HepG2 (cell line): ENCODE measurements at regions of chr16 and their contacts with region 1.

Region 1: DNA sequence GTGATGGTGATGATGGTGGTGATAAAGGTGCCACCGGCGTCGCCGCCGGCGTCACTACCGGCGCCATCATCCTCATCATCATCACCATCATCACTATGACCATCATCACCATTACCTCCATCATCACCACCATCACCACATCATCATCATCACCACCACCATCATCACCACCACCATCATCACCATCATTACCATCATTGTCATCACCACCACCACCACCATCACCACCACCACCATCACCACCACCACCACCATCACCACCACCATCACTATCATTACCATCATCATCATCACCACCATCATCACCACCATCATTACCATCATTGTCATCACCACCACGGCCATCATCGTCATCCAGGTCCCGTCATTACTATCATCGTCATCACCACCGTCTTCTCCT is 179.7 kb downstream of the NPIPB11 start:
- DNase-seq: no peak
- ATAC-seq: no peak
- H3K4me3 ChIP-seq: no peak overlapping the region
- H3K27ac ChIP-seq: no peak overlapping the region
- H3K4me1 ChIP-seq: peaks cover 33% of the 10 kb centered on the region
- H3K27me3 ChIP-seq: no peaks in the 10 kb centered on the region
- CTCF ChIP-seq: no peak
- EP300 ChIP-seq: no peak
- POLR2A ChIP-seq: no peak
- RAD21 ChIP-seq: no peak

Region 2: GRCh38 chr16:29192325-29193247 is 34.2 kb before region 1 on chr16:
- CTCF ChIA-PET with region 1: no interaction called
- POLR2A ChIA-PET with region 1: no interaction called
- in situ Hi-C with region 1: no loop called
- intact Hi-C with region 1: no loop called
- DNase-seq: no peak
- ATAC-seq: peak; percentile 58
- H3K4me3 ChIP-seq: no peak overlapping the region
- H3K27ac ChIP-seq: no peak overlapping the region
- H3K4me1 ChIP-seq: peaks cover 14% of the 10 kb centered on the region
- H3K27me3 ChIP-seq: peaks cover 4 to 9% of the 10 kb centered on the region in 2 experiments; a peak in 3 of 5 replicates
- CTCF ChIP-seq: peak; percentile 46
- EP300 ChIP-seq: no peak
- POLR2A ChIP-seq: no peak
- RAD21 ChIP-seq: no peak

Region 3: DNA sequence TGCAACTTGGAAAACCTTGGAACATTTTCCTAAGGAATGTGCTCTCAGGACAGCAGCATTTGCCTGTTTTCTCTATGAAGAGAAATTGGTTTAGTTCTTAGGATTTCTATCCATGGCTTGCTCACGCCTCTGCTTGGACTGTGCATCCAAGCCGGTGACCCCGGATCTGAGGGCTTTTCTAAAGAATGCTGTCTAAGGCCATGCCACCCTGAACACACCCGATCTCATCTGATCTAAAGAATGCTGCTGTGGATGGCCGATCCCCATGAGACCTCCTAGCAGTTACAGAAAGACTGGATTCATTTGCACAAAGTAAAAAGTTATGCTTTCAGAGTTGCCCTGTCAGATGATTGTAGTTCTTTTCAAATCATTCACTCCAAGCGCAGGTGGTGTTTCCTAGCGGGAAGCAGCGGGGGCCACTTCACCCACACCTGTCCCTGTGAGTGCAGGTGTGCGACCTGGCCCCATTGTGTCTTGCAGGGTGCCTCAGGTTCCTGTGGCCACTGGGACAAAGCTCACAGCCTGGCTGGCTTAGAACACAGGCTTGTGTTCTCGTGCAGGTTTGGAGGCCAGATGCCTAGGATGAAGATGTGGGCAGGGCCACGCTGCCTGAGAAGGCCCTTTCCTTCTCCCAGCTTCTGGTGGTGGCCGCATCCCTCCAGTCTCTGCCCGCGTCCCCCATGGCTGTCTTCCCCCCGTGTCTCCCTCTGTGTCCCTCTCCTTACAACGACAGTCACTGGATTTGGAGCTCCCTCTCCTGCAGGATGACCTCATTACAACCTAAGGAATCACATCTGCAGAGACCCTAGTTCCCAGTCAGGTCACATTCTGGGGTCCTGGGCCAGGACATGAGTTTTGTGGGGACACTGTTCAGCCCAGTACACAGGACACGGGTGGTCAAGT is 89.1 kb after region 1 on chr16:
- CTCF ChIA-PET with region 1: no interaction called
- POLR2A ChIA-PET with region 1: no interaction called
- in situ Hi-C with region 1: no loop called
- intact Hi-C with region 1: loop called (anchors 5 kb)
- DNase-seq: no peak
- ATAC-seq: peak; percentile 50
- H3K4me3 ChIP-seq: peak overlapping the region in 1 of 3 experiments; percentile 14; a peak in 1 of 6 replicates
- H3K27ac ChIP-seq: no peak overlapping the region
- H3K4me1 ChIP-seq: peaks cover 51% of the 10 kb centered on the region
- H3K27me3 ChIP-seq: peaks cover 0 to 8% of the 10 kb centered on the region in 2 experiments; a peak in 2 of 5 replicates
- CTCF ChIP-seq: peak; percentile 85
- EP300 ChIP-seq: no peak
- POLR2A ChIP-seq: no peak
- RAD21 ChIP-seq: peak; percentile 35; the same call in 1 of the 2 replicates